ENCODE measurements at regions of chr2 and their contacts with region 1.

Region 1: GRCh38 chr2:195575879-195576401 is 81.1 kb upstream of the SLC39A10 start:
- DNase-seq: no peak
- ATAC-seq: peak; percentile 75 to 92 (median 80)
- H3K4me3 ChIP-seq: no peak overlapping the region
- H3K27ac ChIP-seq: no peak overlapping the region
- H3K4me1 ChIP-seq: no peaks in the 10 kb centered on the region
- H3K27me3 ChIP-seq: no peaks in the 10 kb centered on the region
- CTCF ChIP-seq: peak in 3 of 4 donors; percentile 22 to 49 (median 40)
- POLR2A ChIP-seq: no peak

Region 2: GRCh38 chr2:195649629-195650190 is 73.8 kb after region 1 on chr2:
- intact Hi-C with region 1: loop called in 1 of 2 experiments (anchors 10 kb)
- DNase-seq: no peak
- ATAC-seq: no peak
- H3K4me3 ChIP-seq: no peak overlapping the region
- H3K27ac ChIP-seq: no peak overlapping the region
- H3K4me1 ChIP-seq: peaks cover 0 to 5% (median 0%) of the 10 kb centered on the region in 4 donors
- H3K27me3 ChIP-seq: no peaks in the 10 kb centered on the region
- CTCF ChIP-seq: no peak
- POLR2A ChIP-seq: no peak

Region 3: GRCh38 chr2:195659982-195660890 is 84.3 kb after region 1 on chr2:
- intact Hi-C with region 1: loop called in 1 of 2 experiments (anchors 5 kb)
- DNase-seq: peak in 2 of 3 donors; percentile 33 to 70
- ATAC-seq: no peak
- H3K4me3 ChIP-seq: no peak overlapping the region
- H3K27ac ChIP-seq: peak overlapping the region in 2 of 3 donors; percentile 4 to 17
- H3K4me1 ChIP-seq: peaks cover 0 to 24% (median 7%) of the 10 kb centered on the region in 4 donors
- H3K27me3 ChIP-seq: no peaks in the 10 kb centered on the region
- CTCF ChIP-seq: peak; percentile 75 to 87 (median 84)
- POLR2A ChIP-seq: no peak

Region 4: DNA sequence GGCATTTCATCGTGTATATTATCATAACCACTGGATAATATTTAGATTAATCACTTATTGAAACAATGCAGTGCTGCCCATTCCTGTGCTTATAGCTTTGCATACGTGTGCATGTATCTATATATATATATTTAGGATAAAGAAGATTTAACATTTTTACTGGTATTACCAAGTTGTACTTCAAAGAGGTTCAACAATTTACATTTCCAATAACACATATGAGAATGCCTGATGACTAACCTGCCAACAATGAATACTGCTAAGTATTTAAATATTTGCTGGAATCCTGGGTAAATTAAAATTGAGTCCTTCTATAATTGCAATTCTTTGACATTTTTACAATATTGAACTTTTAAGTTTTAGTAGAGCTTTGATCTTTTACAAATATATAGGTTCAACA is 192.5 kb after region 1 on chr2:
- intact Hi-C with region 1: no loop called
- DNase-seq: no peak
- ATAC-seq: no peak
- H3K4me3 ChIP-seq: no peak overlapping the region
- H3K27ac ChIP-seq: no peak overlapping the region
- H3K4me1 ChIP-seq: no peaks in the 10 kb centered on the region
- H3K27me3 ChIP-seq: no peaks in the 10 kb centered on the region
- CTCF ChIP-seq: no peak
- POLR2A ChIP-seq: no peak

Region 5: GRCh38 chr2:195848156-195848899 is 272.4 kb after region 1 on chr2:
- intact Hi-C with region 1: no loop called
- DNase-seq: no peak
- ATAC-seq: no peak
- H3K4me3 ChIP-seq: no peak overlapping the region
- H3K27ac ChIP-seq: no peak overlapping the region
- H3K4me1 ChIP-seq: no peaks in the 10 kb centered on the region
- H3K27me3 ChIP-seq: no peaks in the 10 kb centered on the region
- CTCF ChIP-seq: no peak
- POLR2A ChIP-seq: no peak

Measured in right lobe of liver (tissue), 6 donors.